AG04449 (cell line): ENCODE measurements at regions of chr2 and their contacts with region 1.

Region 1: DNA sequence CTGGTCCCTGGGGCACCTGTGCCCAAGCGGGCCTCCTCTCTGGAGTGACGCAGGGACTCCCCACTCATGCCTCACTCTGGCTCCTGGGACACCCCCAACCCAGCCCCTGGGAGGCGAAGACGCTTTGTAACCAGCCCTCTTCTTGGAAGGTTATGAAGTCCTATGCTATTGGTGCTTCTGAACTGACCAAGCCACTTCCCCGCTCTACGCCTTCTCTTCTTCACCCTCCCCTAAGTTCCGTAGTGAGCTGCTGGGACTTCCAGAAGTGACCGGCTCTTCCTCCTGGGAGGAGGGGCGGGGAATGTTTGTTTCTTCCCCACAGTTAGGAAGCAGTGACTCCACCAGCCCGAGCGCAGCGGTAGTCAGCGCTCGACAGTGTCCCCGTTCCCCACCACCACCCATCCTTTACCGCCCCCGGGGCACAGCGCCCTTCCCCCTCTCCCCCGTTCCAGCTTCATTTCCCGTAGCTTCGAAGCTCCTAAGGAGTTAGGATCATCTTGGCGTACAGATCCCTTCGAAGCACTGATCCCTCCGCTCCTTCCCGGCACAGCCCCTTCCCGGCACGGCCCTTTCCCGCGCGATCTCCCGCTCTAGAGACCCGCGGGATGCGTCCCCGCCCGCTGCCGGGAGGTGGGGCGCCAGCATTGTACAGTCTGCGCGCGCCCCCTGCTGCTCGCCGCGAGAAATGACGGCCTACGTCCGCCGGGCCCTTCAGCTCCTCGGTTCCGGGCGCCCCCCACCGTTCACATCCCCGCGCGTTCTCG is 25.3 kb upstream of the NOTO start:
- DNase-seq: no peak
- H3K4me3 ChIP-seq: peak overlapping the region; percentile 71
- CTCF ChIP-seq: peak; percentile 100

Region 2: DNA sequence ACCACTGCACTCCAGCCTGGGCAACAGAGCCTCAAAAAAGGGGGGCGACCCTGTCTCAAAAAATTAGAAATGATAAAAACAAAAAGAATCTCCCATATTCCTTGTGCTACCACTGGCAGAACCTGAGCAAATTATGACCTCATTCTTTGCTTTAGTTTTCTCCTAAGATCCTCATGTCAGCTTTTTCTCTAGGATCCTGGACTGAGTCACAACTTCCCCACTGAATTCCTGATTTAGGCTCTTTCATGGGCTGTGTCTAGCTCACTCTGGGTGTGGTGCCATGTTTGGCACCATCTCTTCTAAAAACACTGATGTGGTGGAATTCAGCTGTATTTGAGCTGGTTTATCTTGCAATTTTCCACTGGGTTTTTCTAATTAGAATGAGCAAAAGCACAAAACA is 388.3 kb before region 1 on chr2:
- CTCF ChIA-PET with region 1: no interaction called
- POLR2A ChIA-PET with region 1: no interaction called
- DNase-seq: no peak
- H3K4me3 ChIP-seq: no peak overlapping the region
- CTCF ChIP-seq: no peak

Region 3: GRCh38 chr2:72862239-72862988 is 314.6 kb before region 1 on chr2:
- CTCF ChIA-PET with region 1: interaction called, 11 read pairs
- POLR2A ChIA-PET with region 1: no interaction called
- DNase-seq: peak; percentile 38
- H3K4me3 ChIP-seq: peak overlapping the region; percentile 39
- CTCF ChIP-seq: peak; percentile 100

Region 4: DNA sequence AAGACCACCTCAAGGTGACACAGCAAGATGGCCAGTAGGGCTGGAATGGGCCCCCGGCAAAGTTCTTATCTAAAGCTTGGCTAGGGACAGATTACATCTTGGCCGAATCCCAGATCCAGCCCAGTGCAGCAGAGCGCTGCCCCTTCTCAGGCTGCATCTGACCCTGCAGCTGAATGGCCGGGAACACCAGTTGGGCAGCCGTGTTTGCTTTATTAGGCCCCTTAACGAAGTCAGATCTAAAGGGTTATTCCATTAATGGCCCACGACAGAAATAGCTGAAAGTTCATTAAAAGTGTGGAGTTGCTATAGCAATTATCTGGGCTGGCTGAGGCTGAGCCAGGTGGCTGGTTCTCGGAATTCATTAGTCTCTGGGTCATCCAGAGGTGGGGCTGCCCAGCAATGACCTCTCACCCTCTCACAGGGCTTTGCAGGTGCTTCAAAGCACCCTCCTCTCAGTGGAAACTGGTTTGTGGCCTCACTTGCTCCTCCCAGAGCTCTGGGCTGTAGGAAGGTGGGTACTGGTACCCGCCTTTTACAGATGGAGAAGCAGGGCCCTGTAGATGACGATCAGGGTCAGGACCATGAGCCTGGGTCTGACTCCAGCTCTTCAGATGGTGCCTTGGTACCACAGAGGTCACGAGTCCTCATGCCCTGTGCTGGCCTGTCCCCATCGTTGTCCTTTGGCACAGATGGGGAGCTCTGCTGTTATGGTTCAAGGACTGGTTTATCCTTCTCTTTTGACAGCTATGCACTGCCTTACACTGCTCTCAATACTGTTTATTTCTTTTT is 191.0 kb before region 1 on chr2:
- CTCF ChIA-PET with region 1: interaction called, 51 read pairs
- POLR2A ChIA-PET with region 1: interaction called, 4 read pairs
- DNase-seq: no peak
- H3K4me3 ChIP-seq: no peak overlapping the region
- CTCF ChIP-seq: no peak

Region 5: DNA sequence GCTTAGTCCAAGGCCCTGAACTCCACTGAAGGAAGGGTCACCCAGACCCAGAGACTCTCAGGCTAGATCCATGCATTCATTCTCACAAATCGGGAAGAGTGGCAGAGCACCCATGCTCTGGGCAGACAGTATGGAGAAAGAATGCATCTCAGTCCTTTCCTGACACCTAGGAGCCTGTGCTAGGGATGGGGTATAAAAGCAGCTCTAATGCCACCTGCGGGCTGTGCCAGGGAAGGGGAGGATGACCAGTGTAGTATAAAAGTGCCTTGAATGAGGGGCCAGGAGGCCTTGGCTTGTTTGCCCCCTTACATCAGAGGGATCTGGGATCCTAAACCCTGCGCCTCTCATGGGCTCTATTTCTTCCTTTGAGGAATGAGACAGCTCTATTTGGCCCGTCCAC is 99.2 kb before region 1 on chr2:
- CTCF ChIA-PET with region 1: interaction called, 50 read pairs
- POLR2A ChIA-PET with region 1: no interaction called
- DNase-seq: no peak
- H3K4me3 ChIP-seq: no peak overlapping the region
- CTCF ChIP-seq: no peak

Region 6: DNA sequence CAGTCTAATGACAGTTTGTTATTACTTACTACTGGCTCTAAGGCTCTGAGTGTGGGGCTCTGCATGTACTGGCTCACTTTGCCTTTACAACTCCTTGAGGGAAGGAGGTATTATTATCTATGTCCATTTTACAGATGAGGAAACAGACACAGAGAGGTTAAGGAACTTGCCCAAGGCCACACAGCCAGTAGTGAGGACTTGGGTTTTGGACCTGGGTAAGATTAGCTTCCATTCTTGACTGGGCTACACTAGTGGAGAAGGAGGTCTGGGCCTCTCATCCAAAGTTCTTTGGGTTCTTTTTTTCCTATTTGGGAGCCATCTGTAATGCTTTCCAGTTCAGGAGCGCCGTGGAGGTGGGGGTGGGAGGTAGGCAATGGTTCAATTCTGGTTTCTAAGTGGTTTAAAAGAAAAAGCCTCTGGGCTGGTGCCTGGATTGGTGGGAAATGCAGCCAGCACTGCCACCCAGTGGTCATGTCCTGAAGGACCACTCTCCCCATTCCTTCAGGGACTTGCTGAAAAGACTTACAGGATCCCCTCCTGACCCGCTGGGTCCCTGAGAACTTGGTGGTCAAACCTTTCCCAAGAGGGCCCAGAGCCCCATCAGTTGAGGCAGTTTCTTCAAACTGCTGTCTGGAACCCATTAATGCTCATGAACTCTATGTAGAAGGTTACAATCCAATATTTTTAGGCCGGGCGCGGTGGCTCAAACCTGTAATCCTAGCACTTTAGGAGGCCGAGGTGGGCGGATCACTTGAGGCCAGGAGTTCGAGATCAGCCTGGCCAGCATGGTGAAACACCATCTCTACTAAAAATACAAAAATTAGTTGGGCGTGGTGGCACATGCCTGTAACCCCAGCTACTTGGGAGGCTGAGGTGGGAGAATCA is 13.3 kb before region 1 on chr2:
- CTCF ChIA-PET with region 1: interaction called, 16 read pairs
- POLR2A ChIA-PET with region 1: no interaction called
- DNase-seq: no peak
- H3K4me3 ChIP-seq: no peak overlapping the region
- CTCF ChIP-seq: peak; percentile 87

Region 7: DNA sequence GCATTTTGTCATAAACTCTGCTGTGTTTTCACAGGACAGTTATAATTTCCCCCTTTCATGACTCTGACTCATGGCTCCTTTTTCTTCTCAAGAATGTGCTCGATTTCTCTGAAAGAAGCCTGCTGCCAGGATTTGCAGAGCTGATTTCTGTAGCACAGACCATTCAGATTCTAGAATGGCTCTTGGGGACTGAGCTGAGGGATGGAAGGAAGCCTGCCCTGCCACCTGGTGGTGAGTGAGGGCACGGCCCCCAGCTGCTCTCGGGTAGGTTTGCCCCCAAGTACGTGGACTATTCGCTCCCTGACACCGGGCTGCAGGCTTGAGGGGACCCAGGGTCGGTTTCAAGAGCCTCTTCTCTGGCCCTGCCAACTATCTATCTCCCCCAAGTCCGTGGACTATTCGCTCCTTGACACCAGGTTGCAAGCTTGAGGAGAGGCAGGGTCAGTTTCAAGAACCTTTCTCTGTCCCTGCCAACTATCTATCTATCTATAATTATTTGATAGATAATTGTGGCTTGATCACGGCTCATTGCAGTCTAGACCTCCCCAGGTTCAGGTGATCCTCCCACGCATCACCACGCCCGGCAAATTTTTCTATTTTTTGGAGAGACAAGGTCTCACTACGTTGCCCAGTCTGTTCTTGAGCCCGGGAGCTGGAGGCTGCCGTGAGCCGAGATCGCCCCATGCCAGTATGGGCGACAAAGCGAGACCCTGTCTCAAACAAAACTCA is 35.5 kb after region 1 on chr2:
- CTCF ChIA-PET with region 1: interaction called, 111 read pairs
- POLR2A ChIA-PET with region 1: no interaction called
- DNase-seq: peak; percentile 65
- H3K4me3 ChIP-seq: no peak overlapping the region
- CTCF ChIP-seq: peak; percentile 96